ENCODE measurements at regions of chr16 and their contacts with region 1.

Region 1: DNA sequence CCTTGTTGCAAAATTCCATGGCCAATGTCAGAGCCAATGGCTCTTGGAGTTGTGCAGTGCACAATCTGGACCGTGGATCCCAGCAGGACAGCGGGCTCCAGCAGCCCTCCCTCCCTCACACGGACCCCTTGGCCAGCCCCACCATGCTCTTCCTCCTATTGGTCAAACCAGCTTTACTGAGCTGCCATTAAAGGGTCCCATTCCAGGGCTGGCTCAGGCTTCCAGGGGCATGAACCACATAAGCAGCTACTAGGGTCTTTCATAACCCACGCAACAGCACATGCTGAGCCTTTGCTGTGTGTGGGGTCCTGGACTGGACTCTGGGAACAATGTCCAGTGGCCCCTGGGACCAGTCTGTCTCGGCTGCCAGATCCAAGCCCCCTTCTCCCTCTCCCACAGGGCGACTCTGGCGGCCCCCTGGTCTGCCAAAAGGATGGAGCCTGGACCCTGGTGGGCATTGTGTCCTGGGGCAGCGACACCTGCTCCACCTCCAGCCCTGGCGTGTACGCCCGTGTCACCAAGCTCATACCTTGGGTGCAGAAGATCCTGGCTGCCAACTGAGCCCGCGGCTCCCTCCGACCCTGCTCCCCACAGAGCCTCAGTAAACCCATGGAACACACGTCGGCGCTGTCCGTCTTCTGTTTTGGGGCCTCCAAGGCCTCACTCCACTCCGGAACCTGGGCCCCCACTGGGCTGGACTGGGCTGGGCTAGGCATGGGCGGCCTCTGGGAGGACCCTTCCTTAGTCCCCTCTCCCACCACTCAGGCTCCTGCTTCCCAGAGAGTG is 5.7 kb downstream of the CTRB1 start:
- DNase-seq: no peak
- H3K4me3 Mint-ChIP-seq: no peak overlapping the region
- H3K27ac Mint-ChIP-seq: no peak overlapping the region
- H3K4me1 Mint-ChIP-seq: peaks cover 1% of the 10 kb centered on the region
- H3K27me3 Mint-ChIP-seq: no peaks in the 10 kb centered on the region

Region 2: GRCh38 chr16:75181630-75182029 is 42.9 kb before region 1 on chr16:
- intact Hi-C with region 1: no loop called
- DNase-seq: no peak
- H3K4me3 Mint-ChIP-seq: no peak overlapping the region
- H3K27ac Mint-ChIP-seq: no peak overlapping the region
- H3K4me1 Mint-ChIP-seq: no peaks in the 10 kb centered on the region
- H3K27me3 Mint-ChIP-seq: peaks cover 5% of the 10 kb centered on the region

Region 3: DNA sequence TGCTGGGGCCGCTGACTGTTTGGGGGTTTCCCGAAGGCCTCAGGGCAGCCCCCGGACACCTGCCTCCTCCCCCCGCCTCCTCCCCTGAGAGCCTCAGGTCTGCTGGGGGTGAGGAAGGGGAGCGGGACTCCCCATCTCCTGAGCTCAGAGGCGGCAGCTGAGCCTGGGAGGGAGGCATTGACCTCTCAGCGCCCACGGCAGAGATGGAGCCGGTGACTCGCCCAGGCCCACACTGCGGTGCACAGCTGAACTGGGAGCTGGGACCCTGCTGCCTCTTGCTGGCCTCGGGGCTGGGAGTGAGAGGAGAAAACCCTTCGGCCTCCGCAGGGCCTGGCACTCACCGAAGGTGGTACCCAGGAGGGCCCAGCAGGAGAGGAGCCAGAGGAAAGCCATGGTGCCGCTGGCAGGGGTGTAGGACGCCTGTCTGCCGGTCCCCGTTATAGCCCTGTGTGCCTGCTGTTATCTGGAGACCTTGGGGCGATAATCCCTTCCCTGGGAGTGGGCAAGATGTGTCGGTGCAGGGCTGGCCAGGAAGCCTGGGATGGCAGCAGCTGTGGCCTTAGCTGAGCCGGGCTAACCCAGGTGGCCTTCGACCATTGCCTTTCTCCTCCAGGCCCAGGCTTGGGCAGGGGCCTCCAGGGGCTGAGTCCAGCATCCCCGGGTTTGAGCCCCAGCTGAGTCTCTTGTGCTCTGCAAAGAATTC is 17.6 kb before region 1 on chr16 and contains the start of gene CTRB2:
- intact Hi-C with region 1: loop called (anchors 2 kb)
- DNase-seq: no peak
- H3K4me3 Mint-ChIP-seq: no peak within 1 kb of the TSS
- H3K27ac Mint-ChIP-seq: no peak within 1 kb of the TSS
- H3K4me1 Mint-ChIP-seq: no peaks in the 10 kb centered on the region
- H3K27me3 Mint-ChIP-seq: no peaks in the 10 kb centered on the region
- total RNA-seq, gene CTRB2: not detected in 2 replicates